IMR-90 (cell line): ENCODE measurements at regions of chr1 and their contacts with region 1.

Region 1: GRCh38 chr1:240611619-240612480 is at the start of gene GREM2:
- DNase-seq: peak; percentile 95
- ATAC-seq: peak; percentile 96
- H3K4me3 ChIP-seq: peak within 1 kb of the TSS; percentile 97
- H3K27ac ChIP-seq: peak within 1 kb of the TSS; percentile 23
- H3K4me1 ChIP-seq: peaks cover 9% of the 10 kb centered on the region
- H3K27me3 ChIP-seq: no peaks in the 10 kb centered on the region
- CTCF ChIP-seq: no peak
- POLR2A ChIP-seq: peak; percentile 60; the same call in 1 of the 2 replicates
- RAD21 ChIP-seq: no peak
- total RNA-seq, gene GREM2: 3.0 and 5.0 TPM in 2 replicates

Region 2: GRCh38 chr1:240455228-240455821 is 156.5 kb before region 1 on chr1:
- CTCF ChIA-PET with region 1: interaction called, 6 read pairs
- POLR2A ChIA-PET with region 1: no interaction called
- dilution Hi-C with region 1: no loop called
- in situ Hi-C with region 1: no loop called
- intact Hi-C with region 1: loop called (anchors 2 kb)
- DNase-seq: peak; percentile 22
- ATAC-seq: peak; percentile 54; the same call in 1 of the 2 replicates
- H3K4me3 ChIP-seq: no peak overlapping the region
- H3K27ac ChIP-seq: no peak overlapping the region
- H3K4me1 ChIP-seq: peaks cover 4% of the 10 kb centered on the region; the same call in 1 of the 2 replicates
- H3K27me3 ChIP-seq: no peaks in the 10 kb centered on the region
- CTCF ChIP-seq: peak; percentile 62
- POLR2A ChIP-seq: no peak
- RAD21 ChIP-seq: peak; percentile 58

Region 3: GRCh38 chr1:240646571-240647240 is 34.9 kb after region 1 on chr1:
- CTCF ChIA-PET with region 1: no interaction called
- POLR2A ChIA-PET with region 1: interaction called, 11 read pairs
- dilution Hi-C with region 1: no loop called
- in situ Hi-C with region 1: no loop called
- intact Hi-C with region 1: no loop called
- DNase-seq: no peak
- ATAC-seq: no peak
- H3K4me3 ChIP-seq: no peak overlapping the region
- H3K27ac ChIP-seq: no peak overlapping the region
- H3K4me1 ChIP-seq: no peaks in the 10 kb centered on the region; the same call in 1 of the 2 replicates
- H3K27me3 ChIP-seq: no peaks in the 10 kb centered on the region; the same call in 1 of the 2 replicates
- CTCF ChIP-seq: no peak
- POLR2A ChIP-seq: no peak
- RAD21 ChIP-seq: no peak

Region 4: DNA sequence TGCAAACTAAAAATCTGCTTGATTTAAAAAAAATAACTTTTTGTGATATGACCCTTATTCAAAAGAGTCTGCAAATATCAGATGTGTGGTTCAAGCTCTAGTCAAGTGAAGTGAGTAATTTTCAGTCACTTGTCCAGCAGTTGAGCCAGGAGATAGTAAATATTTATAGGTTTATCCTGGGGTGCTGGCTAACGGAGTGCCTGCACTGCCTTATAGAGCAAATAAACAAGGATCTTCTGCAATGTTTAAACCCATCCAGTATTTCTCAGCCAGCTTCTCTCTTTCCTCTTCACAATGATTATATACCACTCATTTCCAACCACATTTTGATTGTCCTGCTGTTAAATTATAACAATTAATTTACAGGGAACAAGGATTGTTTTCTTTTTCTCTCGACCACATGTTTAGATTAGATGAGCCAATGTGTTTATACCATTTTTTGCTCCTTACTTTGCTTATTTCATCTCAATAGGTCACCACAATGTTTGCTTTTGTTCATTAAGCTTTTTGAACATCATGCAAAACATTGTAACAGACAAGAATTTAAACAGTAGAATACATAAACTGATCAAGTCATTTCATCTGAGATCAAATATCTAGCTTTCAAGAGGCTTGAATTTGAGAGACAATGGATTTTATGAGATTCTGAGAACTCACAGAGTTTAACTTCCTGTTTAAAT is 60.4 kb after region 1 on chr1:
- CTCF ChIA-PET with region 1: no interaction called
- POLR2A ChIA-PET with region 1: no interaction called
- dilution Hi-C with region 1: no loop called
- in situ Hi-C with region 1: no loop called
- intact Hi-C with region 1: loop called (anchors 5 kb)
- DNase-seq: peak; percentile 51
- ATAC-seq: peak; percentile 91
- H3K4me3 ChIP-seq: no peak overlapping the region
- H3K27ac ChIP-seq: no peak overlapping the region
- H3K4me1 ChIP-seq: 0 out of 2 replicates have a peak, but pooled peaks cover 1% of the 10 kb centered on the region
- H3K27me3 ChIP-seq: peaks cover 1% of the 10 kb centered on the region; the same call in 1 of the 2 replicates
- CTCF ChIP-seq: no peak
- POLR2A ChIP-seq: no peak
- RAD21 ChIP-seq: no peak